Psoas muscle (tissue), 8 donors: ENCODE measurements at regions of chr12 and their contacts with region 1.

Region 1: GRCh38 chr12:56127888-56128669 is at the start of gene ESYT1:
- DNase-seq: peak; percentile 98 to 99
- ATAC-seq: peak; percentile 90 to 93 (median 91)
- H3K4me3 ChIP-seq: peak within 1 kb of the TSS; percentile 86
- H3K27ac ChIP-seq: peak within 1 kb of the TSS; percentile 95
- H3K4me1 ChIP-seq: peaks cover 23% of the 10 kb centered on the region
- H3K27me3 ChIP-seq: no peaks in the 10 kb centered on the region
- CTCF ChIP-seq: no peak
- total RNA-seq, gene ESYT1: 36.7 to 57.4 (median 44.4) TPM

Region 2: GRCh38 chr12:56152318-56153033 is 24.4 kb after region 1 on chr12 and contains the start of gene MYL6B:
- intact Hi-C with region 1: loop called (anchors 2 to 5 kb)
- DNase-seq: peak; percentile 96 to 97
- ATAC-seq: peak; percentile 94 to 97 (median 96)
- H3K4me3 ChIP-seq: peak within 1 kb of the TSS; percentile 75
- H3K27ac ChIP-seq: peak within 1 kb of the TSS; percentile 90
- H3K4me1 ChIP-seq: peaks cover 25% of the 10 kb centered on the region
- H3K27me3 ChIP-seq: no peaks in the 10 kb centered on the region
- CTCF ChIP-seq: no peak
- total RNA-seq, gene MYL6B: 113 to 2,222 (median 606) TPM

Region 3: GRCh38 chr12:56178347-56178746 is 50.3 kb after region 1 on chr12:
- intact Hi-C with region 1: no loop called
- DNase-seq: no peak
- ATAC-seq: peak in 1 of 4 donors; percentile 21
- H3K4me3 ChIP-seq: no peak overlapping the region
- H3K27ac ChIP-seq: no peak overlapping the region
- H3K4me1 ChIP-seq: no peaks in the 10 kb centered on the region
- H3K27me3 ChIP-seq: no peaks in the 10 kb centered on the region
- CTCF ChIP-seq: no peak

Region 4: GRCh38 chr12:56258057-56258819 is 130.2 kb after region 1 on chr12 and contains the start of gene ANKRD52:
- intact Hi-C with region 1: loop called in 1 of 2 experiments (anchors 5 kb)
- DNase-seq: peak; percentile 82 to 85
- ATAC-seq: peak; percentile 71 to 84 (median 79)
- H3K4me3 ChIP-seq: peak within 1 kb of the TSS; percentile 97
- H3K27ac ChIP-seq: peak within 1 kb of the TSS; percentile 89
- H3K4me1 ChIP-seq: peaks cover 42% of the 10 kb centered on the region
- H3K27me3 ChIP-seq: no peaks in the 10 kb centered on the region
- CTCF ChIP-seq: peak; percentile 83
- total RNA-seq, gene ANKRD52: 14.2 to 37.5 (median 21.5) TPM

Region 5: DNA sequence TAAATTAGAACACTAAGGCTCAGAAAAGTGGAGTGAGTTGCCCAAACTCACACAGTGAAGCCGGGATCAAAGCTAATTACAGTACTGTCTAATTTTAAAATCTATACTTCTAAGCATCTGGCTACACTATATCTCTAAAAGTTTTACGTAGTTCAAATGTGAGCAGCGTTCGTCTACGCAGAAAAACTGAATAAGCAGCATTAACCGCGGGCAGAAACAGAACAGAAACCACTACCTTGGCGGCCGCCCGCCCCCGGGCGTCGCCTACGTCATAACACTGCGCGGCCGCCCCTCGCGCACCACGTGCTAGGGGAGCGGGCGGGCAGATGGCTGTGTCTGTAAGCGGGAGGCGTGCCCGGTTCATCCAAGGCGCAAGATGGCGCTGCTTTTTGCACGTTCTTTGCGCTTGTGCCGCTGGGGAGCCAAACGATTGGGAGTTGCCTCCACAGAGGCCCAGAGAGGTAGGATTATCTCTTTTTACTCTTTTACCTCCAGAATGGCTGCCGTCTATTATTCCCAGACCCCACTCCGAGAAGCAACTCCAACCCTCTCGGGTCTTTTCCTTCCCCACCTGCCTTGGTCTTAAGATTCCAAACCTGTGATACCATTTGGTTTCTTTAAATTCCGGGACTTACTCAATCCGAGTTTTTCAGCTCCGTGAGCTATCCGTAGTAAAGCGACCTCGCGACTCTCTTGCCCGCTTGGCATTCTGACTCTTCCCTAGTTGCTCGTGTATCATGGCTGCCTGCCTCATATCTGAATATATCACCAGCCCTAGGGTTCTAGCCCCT is 340.3 kb after region 1 on chr12 and contains the start of gene SPRYD4:
- intact Hi-C with region 1: loop called (anchors 5 to 10 kb)
- DNase-seq: peak; percentile 93 to 97
- ATAC-seq: peak; percentile 97 to 98 (median 98)
- H3K4me3 ChIP-seq: peak within 1 kb of the TSS; percentile 81
- H3K27ac ChIP-seq: peak within 1 kb of the TSS; percentile 90
- H3K4me1 ChIP-seq: peaks cover 7% of the 10 kb centered on the region
- H3K27me3 ChIP-seq: no peaks in the 10 kb centered on the region
- CTCF ChIP-seq: peak; percentile 11
- total RNA-seq, gene SPRYD4: 2.8 to 4.4 (median 3.7) TPM

Region 6: DNA sequence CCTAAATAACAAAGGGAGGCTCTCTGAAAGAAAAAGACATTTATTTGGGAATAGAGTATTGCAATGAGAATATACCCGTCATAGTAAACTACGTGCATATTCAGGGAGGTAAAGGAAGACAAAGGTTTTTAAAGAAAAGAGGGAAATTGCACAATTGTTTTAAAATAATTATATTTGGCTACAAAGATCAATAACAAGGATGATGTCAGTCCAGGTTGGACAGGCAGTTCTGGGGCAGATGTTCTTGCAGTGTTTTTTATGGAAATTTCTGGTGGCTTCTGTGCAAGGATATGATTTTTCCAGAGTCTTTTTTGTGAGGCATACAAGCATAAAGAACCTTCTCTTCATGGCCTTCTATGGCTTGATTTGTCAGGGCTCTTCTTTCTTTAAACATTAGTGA is 664.6 kb after region 1 on chr12:
- intact Hi-C with region 1: no loop called
- DNase-seq: no peak
- ATAC-seq: no peak
- H3K4me3 ChIP-seq: no peak overlapping the region
- H3K27ac ChIP-seq: no peak overlapping the region
- H3K4me1 ChIP-seq: no peaks in the 10 kb centered on the region
- H3K27me3 ChIP-seq: peaks cover 0 to 5% (median 3%) of the 10 kb centered on the region in 3 donors
- CTCF ChIP-seq: no peak